Posterior cingulate gyrus (tissue), 11 donors: ENCODE measurements at regions of chr3 and their contacts with region 1.

Region 1: GRCh38 chr3:159616212-159616825 is 372.3 kb upstream of the IL12A start:
- DNase-seq: peak in 7 of 10 donors; percentile 24 to 81 (median 44)

Region 2: GRCh38 chr3:158970006-158970405 is 646.3 kb before region 1 on chr3:
- intact Hi-C with region 1: no loop called
- DNase-seq: no peak

Region 3: DNA sequence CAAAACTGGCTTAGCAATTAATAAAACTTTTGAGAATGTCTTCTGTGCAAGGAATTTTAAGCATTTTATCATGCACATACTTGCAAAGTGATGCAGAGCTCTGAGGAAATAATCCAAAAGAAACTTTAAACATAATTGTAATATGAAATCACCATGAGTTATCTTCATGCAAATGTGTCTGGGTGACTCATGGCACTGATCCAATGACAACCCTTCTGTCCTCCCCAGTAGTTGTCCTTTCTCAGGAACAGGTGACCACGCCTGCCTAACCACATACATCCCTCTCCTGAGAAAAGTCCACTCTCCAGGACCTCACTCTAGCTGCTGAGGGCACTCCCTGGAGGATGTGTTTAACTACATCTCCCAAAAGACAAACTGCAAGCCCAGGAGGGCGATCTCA is 158.3 kb before region 1 on chr3:
- intact Hi-C with region 1: no loop called
- DNase-seq: peak in 1 of 10 donors; percentile 49

Region 4: DNA sequence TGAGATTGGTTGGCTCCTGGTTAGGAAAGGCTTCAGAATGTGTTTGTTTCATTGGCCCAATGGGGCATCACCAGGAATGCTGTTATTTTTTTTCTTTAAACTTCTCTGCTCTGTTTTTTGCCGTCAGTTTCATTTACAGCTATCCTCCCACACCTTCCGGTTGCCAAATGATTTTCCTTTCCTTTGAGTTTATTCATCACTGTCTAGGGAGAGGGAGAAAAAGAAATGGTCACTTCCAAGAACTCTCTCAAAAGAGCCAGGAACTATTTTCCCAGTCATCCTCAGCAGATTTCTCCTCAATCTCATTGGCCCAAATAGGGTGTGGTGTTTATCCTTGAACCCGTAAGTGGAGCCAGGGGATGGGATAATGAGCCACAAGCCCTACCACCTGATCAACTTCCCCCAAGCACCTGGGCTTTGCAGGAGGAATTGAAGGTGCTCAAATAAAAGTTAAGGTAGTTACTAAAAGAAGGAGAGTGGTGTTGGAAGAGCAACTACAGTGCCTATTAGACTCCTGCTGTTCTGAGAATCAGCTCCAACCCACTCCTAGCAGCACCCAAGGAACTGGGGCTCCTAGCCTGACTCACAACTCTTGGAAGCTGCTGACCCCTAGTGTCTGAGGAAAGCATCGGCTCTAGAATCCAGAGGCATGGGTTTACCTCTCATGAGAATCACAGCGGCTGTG is 188.5 kb after region 1 on chr3:
- intact Hi-C with region 1: loop called (anchors 1 kb)
- DNase-seq: peak; percentile 49 to 95 (median 77)